Gastrocnemius medialis (tissue), 4 donors: ENCODE measurements at regions of chr2 and their contacts with region 1.

Region 1: DNA sequence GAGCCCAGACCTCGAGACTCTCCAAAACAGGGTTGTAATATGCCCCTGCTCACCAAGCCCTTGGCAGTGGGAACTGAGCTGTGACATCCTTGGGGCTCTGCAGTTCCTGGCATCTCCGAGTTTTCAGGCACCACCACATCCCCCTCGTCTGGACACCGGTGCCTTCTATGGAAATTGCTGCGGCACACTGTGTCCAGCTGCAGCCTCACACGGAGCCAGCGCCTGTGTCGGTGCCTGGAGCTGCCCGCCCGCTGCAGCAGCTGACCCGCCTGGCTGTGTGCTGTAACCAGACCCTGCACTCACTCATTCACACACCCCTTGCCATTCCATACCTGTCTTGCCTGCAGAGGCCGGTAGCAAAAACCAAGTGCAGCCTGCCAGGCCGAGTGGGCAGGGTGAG is 11.8 kb downstream of the IWS1 start:
- DNase-seq: peak; percentile 86 to 92
- ATAC-seq: peak; percentile 84 to 86
- H3K4me3 ChIP-seq: peak overlapping the region; percentile 28 to 42 (median 32)
- H3K27ac ChIP-seq: peak overlapping the region; percentile 88 to 92 (median 90)
- H3K4me1 ChIP-seq: peaks cover 75 to 79% of the 10 kb centered on the region in 2 donors
- H3K27me3 ChIP-seq: no peaks in the 10 kb centered on the region
- CTCF ChIP-seq: no peak
- POLR2A ChIP-seq: peak; percentile 33 to 64

Region 2: GRCh38 chr2:127810619-127811396 is 296.3 kb after region 1 on chr2 and contains the start of gene WDR33:
- in situ Hi-C with region 1: no loop called
- intact Hi-C with region 1: loop called (anchors 5 kb)
- DNase-seq: peak; percentile 80 to 90
- ATAC-seq: peak; percentile 95 to 96
- H3K4me3 ChIP-seq: peak within 1 kb of the TSS; percentile 70 to 89 (median 88)
- H3K27ac ChIP-seq: peak within 1 kb of the TSS; percentile 86 to 97 (median 93)
- H3K4me1 ChIP-seq: peaks cover 34 to 48% of the 10 kb centered on the region in 2 donors
- H3K27me3 ChIP-seq: no peaks in the 10 kb centered on the region
- CTCF ChIP-seq: peak in 2 of 5 experiments; percentile 15 to 19
- POLR2A ChIP-seq: peak; percentile 76 to 79
- total RNA-seq, gene WDR33: 13.6 to 31.4 (median 20.6) TPM

Region 3: DNA sequence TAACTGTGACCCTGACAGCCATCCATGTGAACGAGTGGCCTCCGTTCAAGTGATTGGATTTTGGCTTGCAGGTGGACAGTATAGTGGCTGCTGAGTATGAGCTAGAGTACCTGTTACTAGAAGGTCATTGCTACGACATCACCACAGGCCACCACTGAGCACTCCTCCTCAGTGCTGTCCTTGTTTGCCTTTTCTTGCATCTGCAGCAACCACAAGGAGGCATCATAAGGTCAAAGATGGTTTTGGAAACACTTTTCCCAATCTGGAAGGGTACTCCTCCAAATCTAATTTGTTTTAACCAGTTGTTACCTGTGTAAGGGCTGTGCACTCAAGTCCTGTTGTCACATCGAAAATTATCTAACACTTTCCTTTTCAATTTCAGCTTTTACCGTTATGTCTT is 657.7 kb after region 1 on chr2:
- in situ Hi-C with region 1: no loop called
- intact Hi-C with region 1: no loop called
- DNase-seq: no peak
- ATAC-seq: no peak
- H3K4me3 ChIP-seq: no peak overlapping the region
- H3K27ac ChIP-seq: no peak overlapping the region
- H3K4me1 ChIP-seq: no peaks in the 10 kb centered on the region
- H3K27me3 ChIP-seq: no peaks in the 10 kb centered on the region
- CTCF ChIP-seq: peak in 1 of 5 experiments; percentile 15
- POLR2A ChIP-seq: no peak